Upper lobe of right lung (tissue), 1 donor: ENCODE measurements at regions of chr4 and their contacts with region 1.

Region 1: DNA sequence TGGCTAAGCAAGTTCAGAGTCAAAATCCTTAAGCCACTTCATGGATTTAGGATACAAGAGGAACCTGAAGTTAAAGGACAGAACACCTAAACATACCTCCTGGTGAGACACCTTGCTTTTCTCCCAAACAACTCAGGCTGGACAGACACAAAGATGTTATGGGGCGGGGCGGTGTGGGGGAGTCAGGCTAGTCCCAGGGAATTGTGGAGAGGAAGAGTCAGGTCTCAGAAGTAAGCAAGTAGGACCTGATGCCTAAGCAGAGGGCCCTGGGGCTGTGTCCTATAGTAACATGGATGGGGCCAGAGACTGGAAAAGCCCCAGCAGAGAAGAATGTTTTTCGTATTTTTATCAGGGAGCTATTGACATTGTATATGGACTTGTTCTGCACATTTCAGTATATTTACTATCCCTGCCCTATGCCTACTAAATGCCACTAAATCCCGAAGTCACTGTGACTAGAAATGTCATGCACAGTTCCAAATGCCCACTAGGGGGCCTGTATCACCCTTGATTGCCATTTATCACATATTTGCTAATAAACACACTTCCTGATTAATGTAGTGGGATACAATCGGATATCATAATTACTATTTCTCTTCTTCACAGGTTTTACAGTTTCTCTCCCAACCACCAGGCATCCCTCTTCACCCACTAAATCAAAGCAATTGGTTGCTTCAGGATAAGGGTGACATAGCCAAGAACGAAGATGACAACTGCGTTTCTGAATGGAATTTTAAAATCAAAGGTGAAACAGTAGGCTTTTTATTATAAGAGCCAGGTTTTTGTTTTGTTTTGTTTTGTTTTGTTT is 23.8 kb upstream of the ARHGAP10 start:
- DNase-seq: no peak
- ATAC-seq: peak; percentile 87
- H3K4me3 ChIP-seq: no peak overlapping the region
- H3K27ac ChIP-seq: no peak overlapping the region
- H3K4me1 ChIP-seq: no peaks in the 10 kb centered on the region
- H3K27me3 ChIP-seq: no peaks in the 10 kb centered on the region
- CTCF ChIP-seq: peak; percentile 90

Region 2: DNA sequence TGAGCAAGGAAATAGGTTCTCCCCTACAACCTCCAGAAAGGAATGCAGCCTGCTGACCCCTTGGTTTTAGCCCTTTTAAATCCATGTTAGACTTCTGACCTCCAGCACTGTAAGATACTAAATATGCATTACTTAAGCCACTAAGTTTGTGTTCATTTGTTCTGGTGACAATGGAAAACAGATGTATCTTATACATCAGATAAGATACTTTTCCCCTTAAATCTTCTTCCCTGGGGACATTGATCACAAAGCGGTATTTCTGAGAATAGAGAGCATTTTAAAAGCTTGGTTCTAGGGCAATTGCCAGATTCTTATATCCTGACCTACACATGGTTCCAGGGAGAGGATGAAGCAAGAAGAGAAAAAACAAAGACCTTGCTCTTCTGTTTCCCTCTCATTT is 97.4 kb before region 1 on chr4:
- intact Hi-C with region 1: no loop called
- DNase-seq: no peak
- ATAC-seq: no peak
- H3K4me3 ChIP-seq: no peak overlapping the region
- H3K27ac ChIP-seq: no peak overlapping the region
- H3K4me1 ChIP-seq: no peaks in the 10 kb centered on the region
- H3K27me3 ChIP-seq: no peaks in the 10 kb centered on the region
- CTCF ChIP-seq: no peak

Region 3: GRCh38 chr4:147866532-147867271 is 158.6 kb after region 1 on chr4:
- intact Hi-C with region 1: loop called (anchors 5 kb)
- DNase-seq: peak; percentile 90
- ATAC-seq: peak; percentile 97
- H3K4me3 ChIP-seq: no peak overlapping the region
- H3K27ac ChIP-seq: no peak overlapping the region
- H3K4me1 ChIP-seq: no peaks in the 10 kb centered on the region
- H3K27me3 ChIP-seq: no peaks in the 10 kb centered on the region
- CTCF ChIP-seq: peak; percentile 99